GM10248 (cell line): ENCODE measurements at regions of chr19 and their contacts with region 1.

Region 1: DNA sequence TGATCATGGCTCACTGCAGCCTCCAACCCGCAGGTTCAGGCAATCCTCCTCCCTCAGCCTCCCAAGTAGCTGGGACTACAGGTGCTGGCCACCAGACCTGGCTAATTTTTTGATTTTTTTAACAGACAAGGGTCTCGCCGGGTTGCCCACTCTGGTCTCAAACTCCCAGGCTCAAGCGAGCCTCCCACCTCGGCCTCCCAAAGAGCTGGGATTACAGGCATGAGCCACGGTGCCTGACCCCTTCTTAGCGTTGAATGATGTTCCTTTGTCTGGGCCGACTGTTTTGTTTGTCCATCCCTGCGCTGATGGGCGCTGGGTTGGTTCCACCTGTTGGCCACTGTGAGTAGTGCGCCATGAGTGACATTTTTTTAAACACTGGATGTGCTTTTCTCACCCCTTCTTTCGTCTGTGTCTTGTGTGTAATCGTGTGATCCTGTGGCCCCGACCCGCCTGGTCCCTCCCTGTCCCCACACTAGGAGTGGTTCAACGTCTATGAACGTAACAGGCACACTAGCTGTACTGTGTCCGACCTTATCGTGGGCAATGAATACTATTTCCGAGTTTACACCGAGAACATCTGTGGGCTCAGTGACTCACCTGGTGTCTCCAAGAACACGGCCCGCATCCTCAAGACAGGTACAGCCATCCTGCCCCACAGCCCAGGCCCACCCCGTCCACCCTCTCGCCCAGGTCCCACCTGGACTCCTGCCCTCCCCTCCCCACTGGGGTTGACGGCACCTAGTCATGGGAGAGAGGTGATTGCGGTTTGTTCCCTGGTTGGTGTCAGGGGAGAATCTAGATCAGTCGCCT is 15.0 kb upstream of the EMC10 start:
- DNase-seq: peak; percentile 88
- CTCF ChIP-seq: peak; percentile 81

Region 2: GRCh38 chr19:50349277-50350057 is 111.8 kb before region 1 on chr19:
- CTCF ChIA-PET with region 1: interaction called, 19 read pairs
- POLR2A ChIA-PET with region 1: no interaction called
- DNase-seq: no peak
- CTCF ChIP-seq: no peak

Region 3: DNA sequence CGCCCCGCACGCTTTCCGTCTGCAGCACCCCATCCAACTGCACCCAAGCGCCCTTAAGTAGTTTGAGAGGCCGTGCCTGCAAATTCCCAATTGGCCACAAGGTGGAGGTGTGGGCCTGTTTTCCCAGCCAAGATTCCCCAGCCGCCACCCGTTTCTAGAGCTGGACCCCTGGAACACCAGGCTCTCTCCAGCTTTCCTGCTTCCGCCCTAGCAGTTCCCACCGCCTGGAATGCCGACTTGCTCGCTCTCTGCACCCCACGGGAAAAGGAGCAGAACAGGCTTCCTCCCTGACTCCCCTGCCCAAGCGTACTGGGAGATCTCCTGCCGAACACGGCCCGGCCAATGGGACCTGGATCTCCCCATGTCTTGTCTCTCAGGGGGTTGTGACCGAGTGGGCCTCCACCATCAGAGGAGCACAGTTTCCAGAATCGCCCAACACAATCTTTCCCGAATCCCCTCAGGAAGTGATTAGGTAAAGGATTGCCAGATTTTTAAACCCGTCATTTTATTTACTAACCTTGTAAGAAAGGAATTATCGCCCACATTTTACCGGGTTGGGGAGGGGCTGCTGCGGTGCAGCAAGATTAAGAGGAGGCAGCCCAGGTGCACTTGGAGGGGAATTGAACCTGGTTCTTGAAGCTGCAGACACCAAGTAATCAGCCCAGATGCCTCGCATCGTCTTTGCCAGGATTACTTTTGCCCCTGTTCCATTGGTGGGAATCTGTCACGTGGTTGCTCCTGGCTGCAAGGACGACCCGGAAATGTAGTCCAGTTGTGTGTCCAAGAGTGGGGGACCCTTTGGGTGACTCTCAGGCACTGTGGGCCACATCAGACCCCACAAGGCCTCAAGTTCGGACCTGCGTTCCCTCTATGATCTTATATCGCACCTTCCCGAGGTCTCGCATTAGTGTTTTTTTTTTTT is 92.4 kb before region 1 on chr19:
- CTCF ChIA-PET with region 1: interaction called, 37 read pairs
- POLR2A ChIA-PET with region 1: interaction called, 3 read pairs
- DNase-seq: peak; percentile 84
- CTCF ChIP-seq: peak; percentile 86

Region 4: GRCh38 chr19:50414864-50415660 is 46.2 kb before region 1 on chr19:
- CTCF ChIA-PET with region 1: interaction called, 10 read pairs
- POLR2A ChIA-PET with region 1: interaction called, 3 read pairs
- DNase-seq: peak; percentile 90
- CTCF ChIP-seq: peak; percentile 96

Region 5: DNA sequence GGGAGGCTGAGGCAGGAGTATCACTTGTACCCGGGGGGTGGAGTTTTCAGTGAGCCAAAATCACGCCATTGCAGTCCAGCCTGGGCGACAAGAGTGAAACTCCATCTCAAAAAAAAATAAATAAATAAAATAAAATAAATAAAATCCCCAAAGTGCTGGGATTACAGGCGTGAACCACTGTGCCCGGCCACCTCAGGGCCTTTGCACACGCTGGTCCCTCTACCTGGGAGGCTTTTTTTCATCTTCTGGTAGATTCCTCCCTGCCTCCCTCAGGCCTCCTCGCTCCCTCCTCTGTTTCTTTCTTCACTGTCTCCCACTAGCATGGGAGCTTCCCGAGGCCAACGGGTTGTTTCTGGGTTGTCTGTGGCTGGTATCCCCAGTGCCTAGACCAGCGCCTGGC is 13.5 kb before region 1 on chr19:
- CTCF ChIA-PET with region 1: interaction called, 10 read pairs
- POLR2A ChIA-PET with region 1: no interaction called
- DNase-seq: no peak
- CTCF ChIP-seq: no peak

Region 6: GRCh38 chr19:50475736-50476223 is 14.5 kb after region 1 on chr19:
- CTCF ChIA-PET with region 1: interaction called, 23 read pairs
- POLR2A ChIA-PET with region 1: no interaction called
- DNase-seq: no peak
- CTCF ChIP-seq: no peak

Region 7: DNA sequence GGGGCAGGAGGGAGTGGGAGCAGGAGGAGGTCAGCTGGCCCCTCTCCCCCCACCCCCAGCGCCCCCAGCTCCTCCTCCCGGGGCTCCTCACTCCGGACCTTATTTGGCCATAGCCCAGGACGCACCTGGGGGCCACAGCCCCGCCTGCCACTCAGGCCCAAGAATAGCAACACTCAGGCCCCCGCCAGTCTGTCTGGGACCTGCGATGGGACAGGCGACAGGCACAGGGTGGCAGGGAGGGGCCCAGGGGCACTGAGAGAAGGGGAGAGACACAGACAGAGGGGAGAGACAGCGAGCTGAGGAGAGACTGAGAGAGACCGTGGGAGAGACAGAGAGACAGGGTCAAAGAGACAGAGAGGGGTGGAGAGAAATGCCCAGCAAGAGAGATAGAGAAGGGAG is 39.5 kb after region 1 on chr19:
- CTCF ChIA-PET with region 1: no interaction called
- POLR2A ChIA-PET with region 1: no interaction called
- DNase-seq: no peak
- CTCF ChIP-seq: no peak

Region 8: GRCh38 chr19:50518091-50519005 is 57.1 kb after region 1 on chr19:
- CTCF ChIA-PET with region 1: no interaction called
- POLR2A ChIA-PET with region 1: no interaction called
- DNase-seq: no peak
- CTCF ChIP-seq: no peak

Region 9: DNA sequence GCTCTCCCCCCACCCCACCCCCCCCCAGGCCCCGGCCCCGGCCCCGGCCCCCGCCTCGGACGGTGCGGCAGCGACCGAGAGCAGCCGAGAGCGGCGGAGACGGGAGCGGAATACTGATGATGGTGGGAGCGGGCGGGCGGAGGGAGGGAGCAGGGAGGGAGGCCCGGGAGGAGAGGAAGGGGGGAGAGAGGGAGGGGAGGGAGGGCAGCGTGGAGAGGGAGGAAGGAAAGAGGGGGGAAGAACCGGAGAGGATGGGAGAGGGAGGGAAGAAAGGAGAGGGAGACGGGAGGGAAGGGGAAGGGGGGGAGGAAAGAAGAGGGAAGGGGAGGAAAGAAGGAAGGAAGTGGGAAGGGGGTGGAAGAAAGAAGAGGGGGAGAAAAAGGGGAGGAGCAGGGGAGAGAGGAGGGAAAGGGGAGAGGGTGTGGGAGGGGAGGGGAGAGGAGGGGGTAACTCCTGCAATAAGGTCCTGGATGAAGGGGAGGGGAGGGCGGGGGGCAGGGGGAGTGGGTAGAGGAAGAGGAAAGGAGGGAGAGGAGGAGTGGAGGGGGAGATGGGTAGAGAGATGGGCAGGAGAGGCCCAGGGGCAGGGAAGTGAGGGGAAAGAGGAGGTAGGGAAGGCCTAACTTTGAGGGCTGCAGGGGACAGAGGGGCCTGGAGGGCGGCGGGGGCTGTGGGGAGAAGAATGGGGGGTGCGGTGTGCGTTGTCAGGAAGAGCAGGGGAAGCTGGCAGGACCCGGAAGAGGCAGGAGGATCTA is 107.2 kb after region 1 on chr19 and contains the start of gene LRRC4B:
- CTCF ChIA-PET with region 1: no interaction called
- POLR2A ChIA-PET with region 1: no interaction called
- DNase-seq: no peak
- CTCF ChIP-seq: no peak